Head of caudate nucleus (tissue), 42 donors: ENCODE measurements at regions of chr16 and their contacts with region 1.

Region 1: GRCh38 chr16:84406006-84406963 is 37.9 kb downstream of the ATP2C2 start:
- DNase-seq: peak; percentile 57 to 94 (median 84)

Region 2: GRCh38 chr16:84277237-84277823 is 129.0 kb before region 1 on chr16:
- intact Hi-C with region 1: loop called (anchors 5 kb)
- DNase-seq: peak; percentile 42 to 96 (median 84)

Region 3: DNA sequence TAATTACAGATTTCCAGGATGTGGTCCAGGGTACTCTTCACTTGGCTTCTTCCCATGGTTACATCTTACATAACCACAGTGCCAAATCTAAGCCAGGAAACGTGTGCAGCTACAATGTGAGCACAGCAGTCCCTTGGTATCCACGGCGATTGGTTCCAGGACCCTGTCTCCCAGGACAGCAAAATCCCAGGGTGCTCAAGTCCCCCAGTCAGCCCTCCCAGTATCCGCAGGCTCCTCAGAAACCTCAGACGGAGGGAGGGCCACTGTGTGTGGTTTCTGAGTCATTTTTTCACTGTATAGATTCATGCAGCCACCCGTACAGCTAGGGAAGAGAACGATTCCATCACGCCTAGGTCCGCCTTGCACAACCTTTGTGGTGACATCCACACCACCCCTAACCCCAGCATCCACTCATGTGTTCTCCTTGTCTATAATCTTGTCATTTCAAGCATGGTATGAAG is 49.1 kb before region 1 on chr16:
- intact Hi-C with region 1: loop called (anchors 10 kb)
- DNase-seq: peak in 6 of 42 donors; percentile 15 to 63 (median 34)